Activated naive CD4-positive, alpha-beta T cell treated with anti-CD3 and anti-CD28 coated beads for 36 hours (primary cell): ENCODE measurements at regions of chr3 and their contacts with region 1.

Region 1: GRCh38 chr3:31462050-31462569 is 70.6 kb upstream of the STT3B start:
- DNase-seq: peak; percentile 56
- H3K4me3 Mint-ChIP-seq: peak overlapping the region; percentile 35
- H3K27ac Mint-ChIP-seq: peak overlapping the region; percentile 70
- H3K4me1 Mint-ChIP-seq: peaks cover 51% of the 10 kb centered on the region
- H3K27me3 Mint-ChIP-seq: no peaks in the 10 kb centered on the region

Region 2: DNA sequence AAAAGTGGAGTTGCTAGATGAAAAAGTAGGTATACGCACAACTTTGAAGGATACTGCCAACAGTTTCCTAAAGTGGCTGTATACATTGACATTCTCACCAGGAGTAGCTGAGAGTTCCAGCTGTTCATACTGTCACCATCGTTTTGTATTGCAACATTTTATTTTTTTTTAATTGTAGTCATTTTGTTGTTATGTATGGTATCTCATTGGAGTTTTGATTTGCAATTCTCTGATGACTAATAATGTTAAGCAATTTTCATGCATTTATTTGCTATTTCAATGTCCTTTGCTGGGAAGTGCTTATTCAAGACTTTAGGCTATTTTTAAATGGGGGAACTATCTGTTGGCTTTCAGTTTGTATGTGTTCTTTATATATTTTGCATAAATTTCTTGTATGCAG is 1040.8 kb before region 1 on chr3:
- CTCF ChIA-PET with region 1: no interaction called
- intact Hi-C with region 1: no loop called
- DNase-seq: no peak
- H3K4me3 Mint-ChIP-seq: no peak overlapping the region
- H3K27ac Mint-ChIP-seq: no peak overlapping the region
- H3K4me1 Mint-ChIP-seq: no peaks in the 10 kb centered on the region
- H3K27me3 Mint-ChIP-seq: no peaks in the 10 kb centered on the region

Region 3: DNA sequence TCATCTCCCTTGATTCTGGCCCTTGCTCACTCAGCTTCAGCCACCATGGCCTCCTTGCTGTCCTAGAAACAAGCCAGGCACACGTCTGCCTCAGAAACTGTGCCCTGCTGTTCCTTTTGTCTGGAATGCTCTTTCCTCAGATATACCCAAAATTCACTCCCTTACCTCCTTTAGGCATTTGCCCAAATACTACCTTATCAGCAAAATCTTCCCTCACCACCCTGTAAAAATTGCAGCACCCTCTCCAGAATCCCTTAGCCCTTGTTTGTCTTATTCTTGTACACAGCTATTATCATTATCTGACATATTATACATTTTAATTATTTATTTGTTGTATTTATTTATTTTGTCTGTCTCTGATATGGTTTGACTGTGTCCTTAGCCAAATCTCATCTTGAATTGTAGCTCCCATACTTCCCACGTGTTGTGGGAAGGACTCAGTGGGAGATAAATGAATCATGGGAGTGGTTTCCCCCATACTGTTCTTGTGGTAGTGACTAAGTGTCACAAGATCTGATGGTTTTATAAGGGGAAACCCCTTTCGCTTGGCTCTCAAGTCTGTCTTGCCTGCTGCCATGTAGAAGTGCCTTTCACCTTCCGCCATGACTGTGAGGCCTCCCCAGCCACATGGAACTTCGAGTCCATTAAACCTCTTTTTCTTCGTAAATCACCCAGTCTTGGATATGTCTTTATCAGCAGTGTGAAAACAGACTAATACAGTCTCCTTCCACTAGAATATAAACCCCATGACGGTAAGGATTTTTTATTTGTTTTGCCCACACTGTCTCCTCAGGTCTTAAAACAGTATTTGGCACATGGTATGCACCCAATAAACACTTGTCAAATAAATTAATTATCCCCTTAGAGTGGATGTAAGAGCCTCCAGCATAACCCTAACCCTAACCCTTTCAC is 10.6 kb after region 1 on chr3:
- CTCF ChIA-PET with region 1: no interaction called
- intact Hi-C with region 1: loop called (anchors 1 kb)
- DNase-seq: peak; percentile 62
- H3K4me3 Mint-ChIP-seq: no peak overlapping the region
- H3K27ac Mint-ChIP-seq: no peak overlapping the region
- H3K4me1 Mint-ChIP-seq: peaks cover 21% of the 10 kb centered on the region
- H3K27me3 Mint-ChIP-seq: no peaks in the 10 kb centered on the region